ENCODE measurements at regions of chr3 and their contacts with region 1.

Region 1: GRCh38 chr3:136171097-136171542 is 25.0 kb downstream of the MSL2 start:
- DNase-seq: peak; percentile 51
- H3K4me3 Mint-ChIP-seq: no peak overlapping the region
- H3K27ac Mint-ChIP-seq: no peak overlapping the region
- H3K4me1 Mint-ChIP-seq: peaks cover 42% of the 10 kb centered on the region
- H3K27me3 Mint-ChIP-seq: no peaks in the 10 kb centered on the region

Region 2: GRCh38 chr3:136186344-136186743 is 15.2 kb after region 1 on chr3:
- CTCF ChIA-PET with region 1: interaction called, 8 read pairs
- POLR2A ChIA-PET with region 1: interaction called, 6 read pairs
- intact Hi-C with region 1: loop called (anchors 1 kb)
- DNase-seq: no peak
- H3K4me3 Mint-ChIP-seq: no peak overlapping the region
- H3K27ac Mint-ChIP-seq: no peak overlapping the region
- H3K4me1 Mint-ChIP-seq: peaks cover 81% of the 10 kb centered on the region
- H3K27me3 Mint-ChIP-seq: no peaks in the 10 kb centered on the region

Region 3: GRCh38 chr3:136326316-136326715 is 155.2 kb after region 1 on chr3:
- CTCF ChIA-PET with region 1: no interaction called
- POLR2A ChIA-PET with region 1: no interaction called
- intact Hi-C with region 1: no loop called
- DNase-seq: no peak
- H3K4me3 Mint-ChIP-seq: no peak overlapping the region
- H3K27ac Mint-ChIP-seq: no peak overlapping the region
- H3K4me1 Mint-ChIP-seq: no peaks in the 10 kb centered on the region
- H3K27me3 Mint-ChIP-seq: no peaks in the 10 kb centered on the region